ENCODE measurements at regions of chr12 and their contacts with region 1.

Region 1: DNA sequence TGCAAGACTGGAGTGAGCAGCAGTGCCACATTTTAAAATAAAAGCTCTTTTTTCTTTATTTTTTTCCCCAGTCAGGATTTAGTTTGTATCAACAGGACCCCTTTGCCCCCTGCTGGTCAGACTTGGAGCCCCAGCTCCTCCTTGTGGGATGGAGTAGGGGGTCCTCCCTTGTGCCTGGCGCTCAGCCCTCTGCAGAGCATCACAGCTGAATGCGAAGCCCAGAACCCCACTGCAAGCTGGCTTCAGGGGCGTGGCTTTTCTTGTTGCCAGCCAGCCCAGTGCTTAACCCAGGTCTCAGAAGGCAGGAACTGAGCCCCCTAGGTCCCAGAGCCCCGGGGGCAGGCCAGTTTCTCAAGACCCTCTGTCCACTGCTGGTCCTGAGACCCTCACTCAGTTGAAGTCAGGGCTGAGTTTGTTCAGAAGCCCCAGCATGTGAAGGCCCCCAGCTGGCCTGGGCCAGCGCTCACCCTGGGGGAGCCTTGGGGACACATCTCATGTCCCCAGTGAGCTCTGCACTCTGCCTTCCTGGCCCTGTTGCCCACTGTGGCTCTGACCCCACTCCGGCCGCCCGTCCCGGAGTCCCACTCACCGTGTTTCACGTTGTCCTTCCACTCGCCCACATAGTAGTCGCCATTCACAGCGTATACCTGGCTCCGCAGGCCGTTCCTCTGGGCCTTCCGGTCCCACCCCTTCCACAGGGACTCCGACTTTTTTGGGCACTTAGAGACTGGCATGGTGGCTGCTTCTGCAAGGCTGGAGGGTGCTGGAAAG is 519 bp downstream of the MORN3 start:
- DNase-seq: peak; percentile 36 to 62 (median 48)
- H3K4me3 ChIP-seq: no peak overlapping the region
- H3K4me3 Mint-ChIP-seq: peak overlapping the region in 4 of 8 donors; percentile 21 to 62 (median 46)
- H3K27ac ChIP-seq: no peak overlapping the region
- H3K27ac Mint-ChIP-seq: peak overlapping the region; percentile 70 to 91 (median 84)
- H3K4me1 ChIP-seq: peaks cover 62% of the 10 kb centered on the region
- H3K4me1 Mint-ChIP-seq: peaks cover 26 to 71% (median 48%) of the 10 kb centered on the region in 4 donors
- H3K27me3 ChIP-seq: no peaks in the 10 kb centered on the region
- H3K27me3 Mint-ChIP-seq: no peaks in the 10 kb centered on the region

Region 2: DNA sequence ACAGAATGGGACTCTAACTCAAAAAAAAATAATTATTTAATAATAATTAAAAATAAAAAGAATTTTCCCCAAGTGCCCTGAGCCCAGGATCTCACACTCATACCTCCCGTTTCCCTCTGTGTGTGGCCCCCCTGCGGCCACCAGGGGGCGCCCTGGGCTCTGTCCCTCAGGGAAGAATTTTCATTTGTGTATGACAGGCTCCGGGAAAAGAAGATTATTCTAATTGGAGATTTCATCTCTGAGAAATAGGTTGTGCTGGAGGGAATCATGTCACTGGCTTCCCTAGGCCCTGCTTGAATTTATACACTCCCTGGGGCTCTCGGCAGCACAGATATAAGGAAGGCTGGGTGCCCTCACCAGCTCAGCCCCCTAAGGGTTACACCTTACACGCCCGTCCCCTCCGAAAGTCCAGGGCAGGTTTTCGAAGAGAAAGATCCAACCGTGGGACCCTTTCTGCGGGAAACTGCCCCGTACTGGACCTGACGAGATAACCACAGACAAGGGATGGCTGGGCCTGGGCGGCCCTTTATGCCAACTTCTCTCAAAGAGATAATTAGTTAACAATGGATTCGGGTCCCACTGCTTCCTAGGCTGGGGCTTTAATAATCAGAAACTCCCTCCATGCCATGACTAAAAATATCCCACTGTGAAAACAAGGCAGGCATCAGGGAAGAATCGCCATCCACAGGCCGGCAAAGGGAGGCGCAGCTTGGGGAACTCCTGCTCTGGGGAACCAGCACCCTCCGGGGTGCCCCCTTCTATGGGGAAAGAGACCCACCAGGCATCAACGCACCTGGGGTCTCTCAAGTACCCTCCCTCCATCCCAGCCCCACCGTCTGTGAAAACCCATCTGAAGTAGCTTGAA is 168.8 kb before region 1 on chr12:
- CTCF ChIA-PET with region 1: interaction called, 21 read pairs
- POLR2A ChIA-PET with region 1: interaction called, 4 read pairs
- intact Hi-C with region 1: no loop called
- DNase-seq: peak; percentile 62 to 72 (median 71)
- H3K4me3 ChIP-seq: no peak overlapping the region
- H3K4me3 Mint-ChIP-seq: peak overlapping the region in 1 of 8 donors; percentile 11
- H3K27ac ChIP-seq: no peak overlapping the region
- H3K27ac Mint-ChIP-seq: peak overlapping the region in 3 of 7 donors; percentile 17 to 74 (median 63)
- H3K4me1 ChIP-seq: peaks cover 17% of the 10 kb centered on the region
- H3K4me1 Mint-ChIP-seq: peaks cover 8 to 21% (median 15%) of the 10 kb centered on the region in 4 donors
- H3K27me3 ChIP-seq: no peaks in the 10 kb centered on the region
- H3K27me3 Mint-ChIP-seq: no peaks in the 10 kb centered on the region

Region 3: GRCh38 chr12:121579981-121580868 is 88.7 kb before region 1 on chr12:
- CTCF ChIA-PET with region 1: interaction called, 8 read pairs
- POLR2A ChIA-PET with region 1: interaction called, 34 read pairs
- intact Hi-C with region 1: loop called (anchors 2 kb)
- DNase-seq: peak; percentile 74 to 86 (median 77)
- H3K4me3 ChIP-seq: peak overlapping the region; percentile 63 to 87
- H3K4me3 Mint-ChIP-seq: peak overlapping the region; percentile 95 to 99 (median 98)
- H3K27ac ChIP-seq: peak overlapping the region; percentile 71
- H3K27ac Mint-ChIP-seq: peak overlapping the region; percentile 92 to 99 (median 98)
- H3K4me1 ChIP-seq: peaks cover 53% of the 10 kb centered on the region
- H3K4me1 Mint-ChIP-seq: peaks cover 21 to 65% (median 44%) of the 10 kb centered on the region in 4 donors
- H3K27me3 ChIP-seq: no peaks in the 10 kb centered on the region
- H3K27me3 Mint-ChIP-seq: no peaks in the 10 kb centered on the region

Region 4: DNA sequence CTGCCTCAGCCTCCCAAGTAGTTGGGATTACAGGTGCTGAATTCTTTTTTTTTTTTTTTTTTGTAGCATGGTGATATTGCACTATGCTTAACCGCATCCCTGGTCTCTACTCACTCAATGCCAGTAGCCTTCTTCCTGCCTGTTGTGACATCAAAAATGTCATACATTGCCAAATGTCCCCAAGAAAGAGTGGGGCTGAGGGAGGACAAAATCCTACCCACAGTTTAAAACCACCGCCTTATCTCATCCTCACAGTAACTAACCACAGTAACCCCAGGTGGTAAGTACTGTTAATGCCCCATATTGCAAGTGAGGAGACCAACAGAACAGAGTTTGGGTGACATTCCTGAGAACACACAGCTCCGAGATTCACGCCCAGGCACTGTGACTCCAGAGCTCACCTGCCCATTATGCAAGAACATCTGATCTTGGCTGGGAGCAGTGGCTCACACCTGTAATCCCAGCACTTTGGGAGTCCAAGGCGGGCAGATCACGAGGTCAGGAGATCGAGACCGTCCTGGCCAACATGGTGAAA is 19.0 kb before region 1 on chr12:
- CTCF ChIA-PET with region 1: interaction called, 74 read pairs
- POLR2A ChIA-PET with region 1: interaction called, 11 read pairs
- intact Hi-C with region 1: no loop called
- DNase-seq: peak; percentile 47 to 65 (median 54)
- H3K4me3 ChIP-seq: no peak overlapping the region
- H3K4me3 Mint-ChIP-seq: peak overlapping the region in 7 of 8 donors; percentile 6 to 79 (median 53)
- H3K27ac ChIP-seq: peak overlapping the region; percentile 10
- H3K27ac Mint-ChIP-seq: peak overlapping the region; percentile 79 to 95 (median 87)
- H3K4me1 ChIP-seq: peaks cover 21% of the 10 kb centered on the region
- H3K4me1 Mint-ChIP-seq: peaks cover 20 to 39% (median 29%) of the 10 kb centered on the region in 4 donors
- H3K27me3 ChIP-seq: no peaks in the 10 kb centered on the region
- H3K27me3 Mint-ChIP-seq: no peaks in the 10 kb centered on the region

Region 5: DNA sequence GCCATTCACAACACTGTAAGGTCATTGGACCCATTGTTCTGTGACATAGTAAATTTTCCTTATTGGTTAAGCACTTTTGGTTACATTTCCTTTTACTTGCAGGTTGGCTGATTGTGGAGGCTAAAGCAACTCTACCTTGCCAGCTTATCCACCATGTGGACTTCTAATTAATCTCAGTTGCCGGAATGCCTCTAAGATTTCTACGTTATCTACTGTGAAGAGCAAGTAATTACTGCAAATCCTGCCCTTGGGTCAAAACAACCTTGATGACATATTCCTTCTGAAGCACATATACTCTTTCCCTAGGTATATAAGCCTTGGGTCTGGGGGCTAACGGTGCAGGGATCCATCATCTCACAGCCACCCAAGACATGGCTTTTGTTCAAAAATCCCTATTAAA is 20.0 kb after region 1 on chr12:
- CTCF ChIA-PET with region 1: interaction called, 8 read pairs
- POLR2A ChIA-PET with region 1: interaction called, 10 read pairs
- intact Hi-C with region 1: loop called (anchors 1 kb)
- DNase-seq: no peak
- H3K4me3 ChIP-seq: no peak overlapping the region
- H3K4me3 Mint-ChIP-seq: no peak overlapping the region
- H3K27ac ChIP-seq: no peak overlapping the region
- H3K27ac Mint-ChIP-seq: peak overlapping the region in 5 of 7 donors; percentile 12 to 48 (median 37)
- H3K4me1 ChIP-seq: peaks cover 6% of the 10 kb centered on the region
- H3K4me1 Mint-ChIP-seq: peaks cover 6 to 13% (median 7%) of the 10 kb centered on the region in 4 donors
- H3K27me3 ChIP-seq: no peaks in the 10 kb centered on the region
- H3K27me3 Mint-ChIP-seq: no peaks in the 10 kb centered on the region

Region 6: GRCh38 chr12:121802846-121803630 is 134.1 kb after region 1 on chr12:
- CTCF ChIA-PET with region 1: no interaction called
- POLR2A ChIA-PET with region 1: interaction called, 20 read pairs
- intact Hi-C with region 1: no loop called
- DNase-seq: peak; percentile 90 to 93 (median 91)
- H3K4me3 ChIP-seq: peak overlapping the region; percentile 98
- H3K4me3 Mint-ChIP-seq: peak overlapping the region; percentile 92 to 99 (median 98)
- H3K27ac ChIP-seq: peak overlapping the region; percentile 91
- H3K27ac Mint-ChIP-seq: peak overlapping the region; percentile 98 to 99 (median 99)
- H3K4me1 ChIP-seq: peaks cover 37% of the 10 kb centered on the region
- H3K4me1 Mint-ChIP-seq: peaks cover 21 to 60% (median 35%) of the 10 kb centered on the region in 4 donors
- H3K27me3 ChIP-seq: no peaks in the 10 kb centered on the region
- H3K27me3 Mint-ChIP-seq: no peaks in the 10 kb centered on the region